Adrenal gland (tissue), 19 donors: ENCODE measurements at regions of chr6 and their contacts with region 1.

Region 1: GRCh38 chr6:35342258-35343091 is at the start of gene PPARD:
- DNase-seq: peak; percentile 98 to 99 (median 98)
- H3K4me3 ChIP-seq: peak within 1 kb of the TSS in 3 of 4 donors; percentile 29 to 90 (median 75)
- H3K27ac ChIP-seq: peak within 1 kb of the TSS in 4 of 5 donors; percentile 81 to 90 (median 85)
- H3K4me1 ChIP-seq: peaks cover 11 to 26% of the 10 kb centered on the region in 2 donors
- H3K27me3 ChIP-seq: no peaks in the 10 kb centered on the region
- CTCF ChIP-seq: peak; percentile 88 to 100 (median 99)
- POLR2A ChIP-seq: peak; percentile 71 to 92
- total RNA-seq, gene PPARD: 6.0 to 32.9 (median 20.0) TPM

Region 2: GRCh38 chr6:34938268-34938667 is 404.2 kb before region 1 on chr6:
- intact Hi-C with region 1: no loop called
- DNase-seq: peak in 2 of 7 donors; percentile 31 to 36
- H3K4me3 ChIP-seq: no peak overlapping the region
- H3K27ac ChIP-seq: peak overlapping the region in 4 of 5 donors; percentile 23 to 88 (median 72)
- H3K4me1 ChIP-seq: peaks cover 33 to 60% of the 10 kb centered on the region in 2 donors
- H3K27me3 ChIP-seq: no peaks in the 10 kb centered on the region
- CTCF ChIP-seq: no peak
- POLR2A ChIP-seq: no peak

Region 3: DNA sequence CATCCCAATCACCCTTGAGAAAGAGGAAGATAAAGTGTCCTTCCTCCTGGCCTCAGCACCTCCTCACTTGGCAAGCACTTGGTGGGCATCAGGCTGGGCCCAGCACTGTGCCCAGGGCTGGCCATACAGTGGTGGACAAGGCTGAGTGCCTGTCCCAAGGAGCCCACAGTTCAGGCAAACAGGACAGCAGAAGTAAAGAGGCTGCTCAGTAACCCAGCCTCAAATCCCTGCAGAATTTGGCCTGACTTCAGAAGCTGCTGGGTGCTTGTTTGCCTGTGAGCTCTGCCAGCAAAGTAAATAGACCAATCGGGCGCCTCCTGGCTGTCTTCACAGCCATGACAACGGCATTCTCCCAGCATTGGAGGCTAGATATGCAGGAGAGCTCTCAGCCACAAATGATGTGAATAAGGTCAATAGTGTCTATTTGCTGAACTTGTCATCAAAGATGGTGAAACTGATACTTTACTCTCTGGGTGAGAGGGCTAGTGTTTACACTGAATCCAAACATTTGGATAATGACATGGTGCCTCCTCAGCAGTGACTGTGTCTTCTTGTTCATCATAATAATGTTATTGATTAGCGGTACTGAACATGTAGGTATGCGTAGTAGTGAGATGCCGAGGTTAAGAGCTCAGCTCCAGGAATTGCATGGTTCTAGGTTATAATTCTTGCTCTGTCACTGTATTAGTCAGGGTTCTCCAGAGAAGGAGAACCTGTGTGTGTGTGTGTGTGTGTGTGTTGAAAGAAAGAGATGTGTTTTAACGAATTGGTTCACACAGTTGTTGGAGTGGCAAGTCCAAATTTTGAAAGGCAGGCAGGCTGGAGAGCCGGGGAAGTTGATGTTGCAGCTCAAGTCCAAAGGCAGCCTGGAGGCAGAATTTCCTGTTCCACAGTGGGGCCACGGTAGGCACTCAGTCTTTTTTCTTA is 72.9 kb after region 1 on chr6:
- intact Hi-C with region 1: loop called (anchors 2 to 10 kb)
- DNase-seq: peak; percentile 75 to 96 (median 88)
- H3K4me3 ChIP-seq: no peak overlapping the region
- H3K27ac ChIP-seq: no peak overlapping the region
- H3K4me1 ChIP-seq: peaks cover 0 to 6% of the 10 kb centered on the region in 2 donors
- H3K27me3 ChIP-seq: no peaks in the 10 kb centered on the region
- CTCF ChIP-seq: peak; percentile 51 to 86 (median 78)
- POLR2A ChIP-seq: no peak

Region 4: GRCh38 chr6:35449287-35449881 is 106.9 kb after region 1 on chr6:
- intact Hi-C with region 1: loop called (anchors 2 kb)
- DNase-seq: peak in 3 of 7 donors; percentile 39 to 63 (median 43)
- H3K4me3 ChIP-seq: no peak overlapping the region
- H3K27ac ChIP-seq: no peak overlapping the region
- H3K4me1 ChIP-seq: peaks cover 7 to 20% of the 10 kb centered on the region in 2 donors
- H3K27me3 ChIP-seq: no peaks in the 10 kb centered on the region
- CTCF ChIP-seq: peak; percentile 61 to 82 (median 78)
- POLR2A ChIP-seq: no peak